GM12878 (cell line): ENCODE measurements at regions of chr13 and their contacts with region 1.

Region 1: DNA sequence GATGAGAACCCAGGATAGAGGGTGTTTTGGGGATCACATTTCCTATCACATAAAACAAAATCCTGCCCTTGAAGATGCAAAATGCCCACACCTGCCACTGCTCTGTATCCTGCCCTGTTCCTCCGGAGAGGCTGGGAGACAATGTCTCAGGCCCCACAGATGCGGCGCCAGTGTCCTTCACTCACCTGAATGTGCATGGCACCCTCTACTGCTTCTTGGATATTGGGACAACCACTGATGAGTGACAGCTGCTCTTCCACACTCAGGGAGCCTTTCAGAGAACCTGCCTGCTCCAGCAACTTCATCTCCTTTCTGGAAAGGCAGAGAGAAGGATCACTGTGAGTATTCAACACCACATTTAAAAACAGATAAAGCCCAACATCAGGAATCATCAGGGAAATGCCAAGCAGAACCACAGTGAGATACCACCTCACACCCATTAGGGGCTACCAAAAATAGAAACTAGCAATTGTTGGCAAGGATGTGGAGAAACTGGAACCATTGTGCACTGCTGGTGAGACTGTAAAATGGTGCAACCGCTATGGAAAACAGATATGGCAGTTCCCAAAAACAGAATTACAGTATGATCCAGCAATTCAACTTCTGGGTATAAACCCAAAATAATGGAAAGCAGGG is 36.4 kb downstream of the CRYL1 start:
- DNase-seq: no peak
- ATAC-seq: peak; percentile 87
- H3K4me3 ChIP-seq: no peak overlapping the region
- H3K27ac ChIP-seq: no peak overlapping the region
- H3K4me1 ChIP-seq: no peaks in the 10 kb centered on the region
- H3K27me3 ChIP-seq: no peaks in the 10 kb centered on the region
- CTCF ChIP-seq: peak; percentile 57 to 63 (median 60)
- EP300 ChIP-seq: no peak
- POLR2A ChIP-seq: no peak
- RAD21 ChIP-seq: peak; percentile 86

Region 2: DNA sequence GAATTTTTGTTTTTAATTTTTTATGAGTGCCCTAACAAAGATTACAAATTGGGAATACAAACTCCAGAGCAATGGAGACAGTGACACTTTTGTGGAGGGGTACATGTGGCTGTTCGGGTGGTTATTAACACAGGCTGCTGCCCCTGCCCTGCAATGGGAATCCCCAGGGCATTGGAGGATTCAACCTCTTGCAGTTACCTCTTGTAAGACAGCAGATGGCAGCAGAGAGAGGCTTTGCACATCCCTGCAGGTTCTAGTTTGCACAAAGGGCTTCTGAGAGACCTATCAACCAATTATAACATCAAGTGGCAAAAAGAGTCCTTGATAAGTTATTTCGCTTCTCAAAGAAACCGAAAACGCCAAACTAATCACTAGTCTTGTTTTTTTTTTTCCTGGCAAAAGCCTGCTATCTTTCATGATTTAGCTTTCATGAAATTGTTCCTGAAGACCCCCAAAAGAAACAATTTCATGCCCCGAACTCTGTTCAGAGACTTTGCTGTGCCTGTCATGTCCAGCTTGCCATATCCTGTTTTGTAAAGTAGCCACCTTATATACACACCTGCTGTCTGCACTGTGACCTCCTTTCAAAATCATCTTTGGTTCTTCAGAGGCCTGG is 307.0 kb before region 1 on chr13:
- CTCF ChIA-PET with region 1: interaction called, 13 read pairs
- POLR2A ChIA-PET with region 1: no interaction called
- RAD21 ChIA-PET with region 1: no interaction called
- SMC1A ChIA-PET with region 1: interaction called, 4 read pairs
- in situ Hi-C with region 1: loop called (anchors 5 kb)
- intact Hi-C with region 1: loop called (anchors 1 kb)
- DNase-seq: peak; percentile 35
- ATAC-seq: peak; percentile 97
- H3K4me3 ChIP-seq: no peak overlapping the region
- H3K27ac ChIP-seq: no peak overlapping the region
- H3K4me1 ChIP-seq: no peaks in the 10 kb centered on the region
- H3K27me3 ChIP-seq: no peaks in the 10 kb centered on the region
- CTCF ChIP-seq: peak; percentile 76 to 85 (median 85)
- EP300 ChIP-seq: no peak
- POLR2A ChIP-seq: no peak
- RAD21 ChIP-seq: peak; percentile 79

Region 3: GRCh38 chr13:20197361-20197834 is 291.9 kb before region 1 on chr13:
- CTCF ChIA-PET with region 1: interaction called, 101 read pairs
- POLR2A ChIA-PET with region 1: no interaction called
- RAD21 ChIA-PET with region 1: interaction called, 13 read pairs
- SMC1A ChIA-PET with region 1: interaction called, 27 read pairs
- in situ Hi-C with region 1: no loop called
- intact Hi-C with region 1: loop called (anchors 1 kb)
- DNase-seq: no peak
- ATAC-seq: peak; percentile 64
- H3K4me3 ChIP-seq: no peak overlapping the region
- H3K27ac ChIP-seq: no peak overlapping the region
- H3K4me1 ChIP-seq: peaks cover 6% of the 10 kb centered on the region; the same call in 1 of the 2 replicates
- H3K27me3 ChIP-seq: peaks cover 4 to 21% of the 10 kb centered on the region in 2 experiments; a peak in 3 of 4 replicates
- CTCF ChIP-seq: peak; percentile 71 to 79 (median 73)
- EP300 ChIP-seq: no peak
- POLR2A ChIP-seq: no peak
- RAD21 ChIP-seq: peak; percentile 85

Region 4: GRCh38 chr13:20424949-20425348 is 64.4 kb before region 1 on chr13:
- CTCF ChIA-PET with region 1: no interaction called
- POLR2A ChIA-PET with region 1: no interaction called
- RAD21 ChIA-PET with region 1: no interaction called
- SMC1A ChIA-PET with region 1: no interaction called
- in situ Hi-C with region 1: no loop called
- intact Hi-C with region 1: loop called (anchors 5 kb)
- DNase-seq: no peak
- ATAC-seq: no peak
- H3K4me3 ChIP-seq: no peak overlapping the region
- H3K27ac ChIP-seq: no peak overlapping the region
- H3K4me1 ChIP-seq: peaks cover 22% of the 10 kb centered on the region
- H3K27me3 ChIP-seq: no peaks in the 10 kb centered on the region
- CTCF ChIP-seq: no peak
- EP300 ChIP-seq: no peak
- POLR2A ChIP-seq: no peak
- RAD21 ChIP-seq: no peak

Region 5: DNA sequence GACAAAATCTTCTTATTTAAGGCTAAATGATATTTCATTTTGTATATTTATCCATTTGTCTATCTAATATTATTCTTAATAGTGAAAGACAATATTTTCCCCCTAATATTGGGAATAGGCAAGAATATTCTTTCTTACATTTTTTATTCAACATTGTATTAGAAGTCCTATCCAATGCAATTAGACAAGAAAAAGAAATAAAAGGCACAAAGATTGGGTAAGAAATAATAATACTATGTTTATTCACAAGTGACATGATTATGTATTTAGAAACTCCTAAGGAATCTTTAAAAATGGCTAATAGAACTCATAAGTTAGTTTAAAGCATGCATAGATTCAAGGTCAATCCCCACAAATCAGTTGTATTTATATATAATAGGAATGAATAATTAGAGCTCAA is 47.7 kb after region 1 on chr13:
- CTCF ChIA-PET with region 1: no interaction called
- POLR2A ChIA-PET with region 1: no interaction called
- RAD21 ChIA-PET with region 1: no interaction called
- SMC1A ChIA-PET with region 1: no interaction called
- in situ Hi-C with region 1: no loop called
- intact Hi-C with region 1: no loop called
- DNase-seq: no peak
- ATAC-seq: no peak
- H3K4me3 ChIP-seq: no peak overlapping the region
- H3K27ac ChIP-seq: no peak overlapping the region
- H3K4me1 ChIP-seq: no peaks in the 10 kb centered on the region
- H3K27me3 ChIP-seq: no peaks in the 10 kb centered on the region
- CTCF ChIP-seq: no peak
- EP300 ChIP-seq: no peak
- POLR2A ChIP-seq: no peak
- RAD21 ChIP-seq: no peak

Region 6: DNA sequence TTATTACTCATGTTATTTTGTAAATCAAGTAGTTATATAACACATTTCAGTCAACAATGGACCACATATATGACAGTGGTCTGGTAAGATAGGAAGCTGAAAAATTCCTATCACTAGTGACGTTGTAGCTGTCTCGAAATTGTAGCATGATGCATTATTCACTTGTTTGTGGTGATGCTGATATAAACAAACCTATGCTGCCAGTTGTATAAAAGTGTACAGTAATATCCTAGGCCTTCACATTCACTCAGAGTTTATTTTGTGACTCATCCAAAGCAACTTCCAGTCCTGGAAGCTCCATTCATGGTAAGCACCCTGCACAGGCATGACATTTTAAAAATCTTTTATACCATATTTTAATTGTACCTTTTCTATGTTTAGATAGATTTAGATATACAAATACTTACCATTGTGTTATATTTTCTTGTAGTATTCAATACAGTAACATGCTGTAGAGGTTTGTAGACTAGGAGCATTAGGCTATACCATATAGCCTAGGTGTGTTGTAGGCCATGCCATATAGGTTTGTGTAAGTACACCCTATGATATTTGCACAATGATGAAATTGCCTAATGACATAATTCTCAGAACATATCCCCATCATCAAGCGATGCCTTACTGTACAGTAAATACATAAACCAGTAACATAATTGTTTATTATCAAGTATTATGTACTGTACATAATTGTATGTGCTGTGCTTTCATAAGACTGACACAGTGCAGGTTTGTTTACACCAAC is 126.9 kb after region 1 on chr13:
- CTCF ChIA-PET with region 1: no interaction called
- POLR2A ChIA-PET with region 1: no interaction called
- RAD21 ChIA-PET with region 1: no interaction called
- SMC1A ChIA-PET with region 1: no interaction called
- in situ Hi-C with region 1: no loop called
- intact Hi-C with region 1: no loop called
- DNase-seq: no peak
- ATAC-seq: no peak
- H3K4me3 ChIP-seq: no peak overlapping the region
- H3K27ac ChIP-seq: no peak overlapping the region
- H3K4me1 ChIP-seq: no peaks in the 10 kb centered on the region
- H3K27me3 ChIP-seq: no peaks in the 10 kb centered on the region
- CTCF ChIP-seq: no peak
- EP300 ChIP-seq: no peak
- POLR2A ChIP-seq: no peak
- RAD21 ChIP-seq: no peak